Ovary (tissue), 10 donors: ENCODE measurements at regions of chr1 and their contacts with region 1.

Region 1: DNA sequence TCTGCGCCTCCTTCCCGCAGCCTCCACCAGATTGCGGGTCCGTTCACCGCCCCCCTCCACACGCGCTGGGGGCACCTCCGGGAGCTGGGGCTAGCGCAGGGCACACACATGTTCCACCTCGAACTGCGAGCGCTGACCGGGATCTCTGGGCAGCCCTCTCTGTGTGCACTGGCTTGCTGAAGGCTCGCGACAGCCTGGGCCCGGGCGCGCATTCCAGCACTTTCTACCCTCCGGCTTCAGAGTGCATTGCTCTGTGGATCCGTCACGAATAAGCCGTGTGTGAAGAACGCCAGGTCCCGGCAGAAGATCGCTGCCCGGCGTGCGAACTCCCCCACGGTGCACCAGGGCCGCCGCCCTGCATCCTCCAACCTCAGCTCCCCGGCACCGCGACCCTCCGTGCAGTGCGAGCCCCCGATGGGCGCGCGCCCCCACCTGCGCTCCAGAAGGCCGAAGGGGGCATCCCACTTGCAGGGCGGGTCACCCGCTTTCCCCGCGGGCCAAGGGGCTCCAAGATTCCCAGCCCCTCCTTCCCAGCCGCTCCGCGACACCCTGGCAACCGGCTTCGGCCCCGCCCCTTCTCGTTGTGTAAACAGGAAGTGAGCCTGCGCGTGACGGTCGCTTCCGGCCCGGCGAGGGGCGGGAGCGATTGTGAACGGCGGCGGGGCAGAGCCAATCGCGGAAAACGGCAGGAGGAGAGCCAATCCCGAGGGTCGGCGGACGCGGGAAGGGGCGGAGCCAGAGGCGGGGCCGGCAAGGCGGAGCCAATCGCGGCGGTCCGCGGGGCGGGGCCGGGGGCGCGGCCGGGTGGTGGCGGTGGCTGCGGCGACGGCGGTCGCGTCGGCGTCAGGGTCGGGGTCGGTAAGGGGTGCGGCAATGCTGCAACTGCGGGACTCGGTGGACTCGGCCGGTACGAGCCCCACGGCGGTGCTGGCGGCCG is at the start of gene TPRG1L:
- DNase-seq: peak; percentile 97 to 99 (median 99)
- H3K4me3 ChIP-seq: peak within 1 kb of the TSS; percentile 94
- H3K27ac ChIP-seq: peak within 1 kb of the TSS; percentile 43 to 60
- H3K4me1 ChIP-seq: peaks cover 9% of the 10 kb centered on the region
- H3K27me3 ChIP-seq: no peaks in the 10 kb centered on the region
- CTCF ChIP-seq: no peak
- EP300 ChIP-seq: no peak
- POLR2A ChIP-seq: peak; percentile 10
- total RNA-seq, gene TPRG1L: 25.3 to 51.1 (median 44.2) TPM

Region 2: GRCh38 chr1:3186513-3186921 is 438.0 kb before region 1 on chr1:
- intact Hi-C with region 1: loop called in 1 of 4 experiments (anchors 10 kb)
- DNase-seq: peak; percentile 74 to 89 (median 86)
- H3K4me3 ChIP-seq: no peak overlapping the region
- H3K27ac ChIP-seq: peak overlapping the region; percentile 17 to 67
- H3K4me1 ChIP-seq: peaks cover 16% of the 10 kb centered on the region
- H3K27me3 ChIP-seq: no peaks in the 10 kb centered on the region
- CTCF ChIP-seq: no peak
- EP300 ChIP-seq: no peak
- POLR2A ChIP-seq: no peak

Region 3: GRCh38 chr1:3611170-3612019 is 13.1 kb before region 1 on chr1 and contains the start of gene MEGF6:
- intact Hi-C with region 1: no loop called
- DNase-seq: peak; percentile 77 to 86 (median 80)
- H3K4me3 ChIP-seq: peak within 1 kb of the TSS; percentile 37
- H3K27ac ChIP-seq: no peak within 1 kb of the TSS
- H3K4me1 ChIP-seq: peaks cover 6% of the 10 kb centered on the region
- H3K27me3 ChIP-seq: no peaks in the 10 kb centered on the region
- CTCF ChIP-seq: no peak
- EP300 ChIP-seq: no peak
- POLR2A ChIP-seq: no peak
- total RNA-seq, gene MEGF6: 6.0 to 117 (median 14.6) TPM